AG04450 (cell line): ENCODE measurements at regions of chr20 and their contacts with region 1.

Region 1: DNA sequence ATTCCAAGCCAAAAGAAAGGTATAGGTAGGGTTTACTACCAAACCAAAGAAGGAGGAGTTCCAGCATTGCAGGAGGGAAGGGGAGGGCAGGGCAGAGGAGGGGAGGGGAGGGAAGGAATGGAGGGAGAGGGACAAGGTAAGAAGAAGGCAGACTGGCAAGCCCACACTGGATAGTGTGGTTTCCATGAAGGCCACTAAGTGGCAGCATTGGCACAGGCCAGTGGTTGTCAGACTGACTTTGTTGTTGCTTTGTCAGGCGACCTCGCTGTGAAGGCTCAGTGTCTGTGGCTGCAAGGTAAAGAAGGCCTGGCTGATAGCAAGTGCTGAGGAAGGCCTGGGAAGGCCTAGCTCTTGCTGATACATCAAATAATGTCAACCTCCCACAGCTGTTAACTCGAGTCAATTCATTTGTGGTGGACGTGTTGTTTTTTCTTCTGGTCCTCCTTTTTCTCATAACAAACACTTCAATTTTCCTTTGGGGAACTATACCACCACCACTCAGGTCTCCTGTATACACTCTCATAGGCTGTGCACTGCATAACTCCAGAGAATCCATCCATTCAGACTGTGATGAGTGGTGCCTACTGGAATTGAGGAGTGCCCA is 7.7 kb upstream of the ZNF334 start:
- DNase-seq: peak; percentile 32
- H3K4me3 ChIP-seq: no peak overlapping the region
- H3K27ac ChIP-seq: no peak overlapping the region
- H3K27me3 ChIP-seq: no peaks in the 10 kb centered on the region
- CTCF ChIP-seq: peak; percentile 74

Region 2: DNA sequence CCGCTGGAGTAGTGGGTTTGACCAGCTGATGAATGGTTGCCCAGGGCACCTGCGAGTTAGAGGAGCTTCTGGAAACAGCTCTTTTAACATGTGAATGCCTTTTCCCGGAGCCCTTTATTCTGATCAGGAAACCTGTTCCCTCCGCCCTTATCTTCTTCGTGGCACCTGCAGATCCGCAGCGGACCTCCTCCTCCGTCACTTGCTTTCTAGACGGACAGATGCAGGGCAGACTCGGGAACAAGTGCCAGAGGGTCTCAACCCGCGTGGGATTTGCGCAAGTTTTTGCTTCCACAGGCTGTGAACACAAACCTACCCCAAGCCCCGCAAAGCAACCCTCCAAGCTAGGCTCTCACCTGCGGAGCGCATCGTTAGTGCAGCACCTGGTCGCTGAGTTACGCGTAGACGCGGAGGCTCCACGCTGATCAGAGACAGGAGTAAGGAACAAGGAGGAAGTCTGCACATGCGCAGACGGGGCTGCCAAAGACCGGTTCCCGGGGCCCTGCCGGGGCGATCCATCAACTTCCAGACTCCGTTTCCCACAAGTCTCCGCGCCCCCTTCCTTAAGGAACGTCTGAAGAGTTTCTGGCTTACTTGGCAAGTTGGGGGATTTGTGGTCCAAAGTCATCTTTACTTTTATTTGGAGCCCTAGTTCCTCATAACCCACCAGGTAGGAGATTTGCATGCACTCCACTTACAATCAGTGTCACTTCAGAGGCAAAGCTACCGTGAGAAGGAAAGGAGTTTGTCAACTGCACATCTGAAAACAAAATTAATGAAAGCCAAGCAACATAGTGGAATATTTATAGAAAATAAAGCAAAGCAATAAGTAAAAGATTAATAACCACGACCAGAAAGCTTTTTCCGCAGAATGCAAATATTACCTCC is 62.0 kb before region 1 on chr20:
- CTCF ChIA-PET with region 1: no interaction called
- POLR2A ChIA-PET with region 1: no interaction called
- DNase-seq: no peak
- H3K4me3 ChIP-seq: no peak overlapping the region
- H3K27ac ChIP-seq: no peak overlapping the region
- H3K27me3 ChIP-seq: peaks cover 15% of the 10 kb centered on the region
- CTCF ChIP-seq: no peak

Region 3: DNA sequence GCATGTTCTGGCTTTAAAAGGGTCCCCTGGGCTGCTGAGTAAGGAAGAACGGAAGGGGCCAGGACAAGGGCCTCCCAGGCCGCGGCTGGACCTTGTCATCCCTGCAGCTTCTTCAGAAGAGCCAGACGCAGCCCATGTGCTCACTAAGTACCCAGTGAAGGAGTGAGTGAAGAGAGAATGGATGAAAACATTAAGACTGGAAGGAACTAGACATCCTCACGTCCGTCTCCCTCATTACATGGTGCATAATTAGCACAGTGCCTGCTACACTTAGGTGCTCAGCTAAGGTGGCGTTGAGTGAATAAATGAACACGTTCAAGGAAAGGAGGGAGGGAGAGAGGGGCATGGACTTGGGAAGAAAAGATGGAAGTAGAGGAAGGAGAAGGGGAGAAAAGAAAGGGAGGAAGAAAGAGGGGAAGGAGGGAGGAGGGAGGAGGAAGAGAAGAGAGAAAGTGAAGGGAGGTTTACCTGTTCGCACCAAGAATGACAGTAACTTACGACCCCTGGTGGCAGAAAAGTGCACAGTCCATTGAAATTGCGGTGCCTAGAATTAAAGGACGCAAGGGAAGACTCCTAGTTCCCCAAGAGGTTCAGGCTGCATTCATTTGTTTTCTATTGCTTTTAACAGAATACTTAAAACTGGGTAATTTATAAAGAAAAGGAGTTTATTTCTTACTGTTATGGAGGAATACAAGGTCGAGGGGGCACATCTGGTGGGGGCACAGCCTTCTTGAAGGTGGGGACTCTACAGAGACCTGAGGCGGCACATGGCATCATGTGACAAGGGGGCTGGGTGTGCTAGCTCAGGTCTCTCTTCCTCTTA is 160.2 kb after region 1 on chr20:
- CTCF ChIA-PET with region 1: interaction called, 43 read pairs
- POLR2A ChIA-PET with region 1: no interaction called
- DNase-seq: no peak
- H3K4me3 ChIP-seq: no peak overlapping the region
- H3K27ac ChIP-seq: no peak overlapping the region
- H3K27me3 ChIP-seq: no peaks in the 10 kb centered on the region
- CTCF ChIP-seq: peak; percentile 85

Region 4: GRCh38 chr20:46784436-46785127 is 263.5 kb after region 1 on chr20:
- CTCF ChIA-PET with region 1: no interaction called
- POLR2A ChIA-PET with region 1: no interaction called
- DNase-seq: no peak
- H3K4me3 ChIP-seq: no peak overlapping the region
- H3K27ac ChIP-seq: no peak overlapping the region
- H3K27me3 ChIP-seq: no peaks in the 10 kb centered on the region
- CTCF ChIP-seq: no peak